ENCODE measurements at regions of chr12 and their contacts with region 1.

Region 1: GRCh38 chr12:91382081-91382543 is 199.5 kb upstream of the DCN start:
- DNase-seq: peak; percentile 63 to 96 (median 83)
- ATAC-seq: peak; percentile 87
- H3K4me3 ChIP-seq: no peak overlapping the region
- H3K4me1 ChIP-seq: no peaks in the 10 kb centered on the region
- CTCF ChIP-seq: peak; percentile 59

Region 2: GRCh38 chr12:91250273-91250665 is 131.8 kb before region 1 on chr12:
- intact Hi-C with region 1: no loop called
- DNase-seq: no peak
- ATAC-seq: no peak
- H3K4me3 ChIP-seq: no peak overlapping the region
- H3K4me1 ChIP-seq: no peaks in the 10 kb centered on the region
- CTCF ChIP-seq: no peak

Region 3: DNA sequence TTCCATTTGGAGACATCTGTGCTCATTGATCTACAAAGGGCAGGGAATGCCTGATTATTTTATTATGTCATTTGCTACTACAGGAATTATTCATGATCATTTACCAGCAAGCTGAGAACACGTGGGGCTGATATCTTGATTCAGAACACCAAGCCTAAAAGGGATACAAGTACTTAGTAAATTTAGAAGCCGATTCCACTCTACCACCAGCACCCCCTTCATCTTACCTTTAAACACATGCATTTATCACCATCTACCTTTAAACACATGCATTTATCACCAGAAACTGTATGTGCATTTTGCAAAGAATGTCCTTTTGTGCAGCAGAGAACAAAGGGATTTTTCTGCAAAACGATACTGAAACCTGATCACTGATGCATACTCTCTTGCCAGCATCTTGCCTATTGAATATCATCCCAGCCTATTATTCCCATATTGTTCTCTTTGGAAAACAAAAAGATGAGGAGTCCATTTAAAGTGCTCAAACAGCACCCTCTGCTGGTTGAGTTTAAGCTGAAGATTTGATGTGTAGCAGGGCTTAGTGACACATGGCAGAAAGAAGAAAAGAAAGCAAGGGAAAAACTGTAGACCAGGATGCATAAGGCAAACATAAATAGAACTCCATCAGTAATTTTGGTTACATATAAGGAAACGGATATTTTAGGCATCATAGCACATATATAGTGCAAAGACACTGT is 1188.1 kb after region 1 on chr12:
- intact Hi-C with region 1: loop called in 1 of 2 experiments (anchors 10 kb)
- DNase-seq: peak in 1 of 3 donors; percentile 94
- ATAC-seq: peak; percentile 82
- H3K4me3 ChIP-seq: no peak overlapping the region
- H3K4me1 ChIP-seq: no peaks in the 10 kb centered on the region
- CTCF ChIP-seq: peak; percentile 24

Region 4: GRCh38 chr12:92649511-92650227 is 1267.6 kb after region 1 on chr12:
- intact Hi-C with region 1: loop called in 1 of 2 experiments (anchors 10 kb)
- DNase-seq: peak in 1 of 3 donors; percentile 81
- ATAC-seq: peak; percentile 91
- H3K4me3 ChIP-seq: no peak overlapping the region
- H3K4me1 ChIP-seq: peaks cover 2% of the 10 kb centered on the region
- CTCF ChIP-seq: peak; percentile 45